Heart left ventricle (tissue), 16 donors: ENCODE measurements at regions of chr13 and their contacts with region 1.

Region 1: DNA sequence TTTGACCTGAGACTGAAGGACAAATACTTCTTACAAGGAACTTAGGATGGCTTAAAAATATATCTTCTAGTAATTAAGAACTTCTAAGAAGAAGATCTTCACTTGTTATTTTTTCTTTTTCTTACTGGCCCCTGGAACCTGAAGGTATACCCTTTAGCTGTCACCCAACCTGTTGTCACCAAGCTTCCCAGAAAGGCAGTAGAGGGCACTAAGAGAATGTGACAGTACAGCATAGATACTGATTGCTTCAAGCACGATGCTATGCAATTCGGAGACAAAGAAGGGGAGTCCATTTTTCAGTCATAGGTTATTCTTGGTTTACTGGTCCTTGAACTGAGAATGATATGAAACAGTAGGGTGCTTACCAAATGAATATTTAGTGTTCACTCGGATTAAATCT is 208.3 kb upstream of the PCDH9 start:
- DNase-seq: no peak
- ATAC-seq: peak in 1 of 4 donors; percentile 45
- H3K4me3 ChIP-seq: no peak overlapping the region
- H3K27ac ChIP-seq: no peak overlapping the region
- H3K4me1 ChIP-seq: no peaks in the 10 kb centered on the region
- H3K27me3 ChIP-seq: no peaks in the 10 kb centered on the region
- CTCF ChIP-seq: peak in 6 of 12 donors; percentile 11 to 28 (median 22)
- POLR2A ChIP-seq: no peak

Region 2: GRCh38 chr13:66994097-66994496 is 444.4 kb before region 1 on chr13:
- intact Hi-C with region 1: no loop called
- DNase-seq: peak; percentile 63 to 76 (median 68)
- ATAC-seq: peak; percentile 90 to 98 (median 96)
- H3K4me3 ChIP-seq: peak overlapping the region in 11 of 12 donors; percentile 7 to 58 (median 43)
- H3K27ac ChIP-seq: peak overlapping the region in 1 of 12 donors; percentile 42
- H3K4me1 ChIP-seq: peaks cover 0 to 7% (median 0%) of the 10 kb centered on the region in 12 donors
- H3K27me3 ChIP-seq: no peaks in the 10 kb centered on the region
- CTCF ChIP-seq: peak; percentile 20 to 70 (median 60)
- POLR2A ChIP-seq: no peak

Region 3: GRCh38 chr13:67833564-67833963 is 395.1 kb after region 1 on chr13:
- intact Hi-C with region 1: loop called in 1 of 10 experiments (anchors 5 kb)
- DNase-seq: no peak
- ATAC-seq: no peak
- H3K4me3 ChIP-seq: no peak overlapping the region
- H3K27ac ChIP-seq: no peak overlapping the region
- H3K4me1 ChIP-seq: no peaks in the 10 kb centered on the region
- H3K27me3 ChIP-seq: no peaks in the 10 kb centered on the region
- CTCF ChIP-seq: no peak
- POLR2A ChIP-seq: no peak